ENCODE measurements at regions of chr7 and their contacts with region 1.

Region 1: GRCh38 chr7:149662591-149663095 is 110.7 kb downstream of the ZNF467 start:
- DNase-seq: peak; percentile 31 to 70 (median 59)
- ATAC-seq: peak; percentile 56
- H3K4me3 ChIP-seq: no peak overlapping the region
- H3K4me3 Mint-ChIP-seq: no peak overlapping the region
- H3K27ac ChIP-seq: no peak overlapping the region
- H3K27ac Mint-ChIP-seq: no peak overlapping the region
- H3K4me1 ChIP-seq: no peaks in the 10 kb centered on the region
- H3K4me1 Mint-ChIP-seq: no peaks in the 10 kb centered on the region
- H3K27me3 ChIP-seq: peaks cover 0 to 3% of the 10 kb centered on the region in 2 experiments
- H3K27me3 Mint-ChIP-seq: peaks cover 34% of the 10 kb centered on the region
- CTCF ChIP-seq: no peak

Region 2: DNA sequence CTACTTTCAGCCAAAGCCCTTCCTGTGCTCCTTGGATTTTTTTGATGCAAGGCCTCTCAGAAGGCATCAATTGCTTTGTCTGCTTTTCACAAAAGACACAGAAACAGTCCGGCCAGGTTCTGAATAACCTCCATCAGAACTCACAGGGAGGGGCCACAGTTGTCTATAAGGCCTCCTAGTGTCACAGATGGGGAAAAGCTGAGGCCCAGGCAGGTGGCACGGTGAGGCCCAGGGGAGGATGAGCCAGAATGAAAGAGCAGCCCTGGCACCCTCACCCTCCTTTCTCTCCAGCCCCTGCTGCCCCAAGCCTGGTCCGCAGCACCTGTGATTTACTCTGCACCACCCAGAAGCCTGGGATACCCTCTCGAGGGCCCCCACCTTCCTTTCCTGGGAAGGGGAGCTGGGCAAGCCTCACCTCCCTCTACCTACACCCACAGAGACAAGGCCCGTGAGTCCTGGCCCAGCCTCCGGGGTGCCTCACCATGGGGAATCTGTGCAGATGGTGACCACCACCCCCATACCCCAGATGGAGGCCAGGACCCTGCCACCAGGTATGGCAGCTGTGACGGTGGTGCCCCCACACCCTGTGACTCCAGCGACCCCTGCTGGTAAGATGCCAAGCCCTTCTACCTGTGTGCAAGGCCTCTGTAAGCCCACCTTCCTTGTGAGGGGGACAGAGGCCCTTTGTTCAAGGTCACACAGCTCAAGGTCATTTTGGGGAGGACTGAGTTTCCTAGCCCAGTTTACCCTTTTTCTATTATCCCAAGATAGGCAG is 136.9 kb after region 1 on chr7:
- CTCF ChIA-PET with region 1: interaction called, 13 read pairs
- POLR2A ChIA-PET with region 1: no interaction called
- intact Hi-C with region 1: loop called in 1 of 2 experiments (anchors 2 kb)
- DNase-seq: peak; percentile 36 to 77 (median 70)
- ATAC-seq: peak; percentile 85
- H3K4me3 ChIP-seq: no peak overlapping the region
- H3K4me3 Mint-ChIP-seq: no peak overlapping the region
- H3K27ac ChIP-seq: no peak overlapping the region
- H3K27ac Mint-ChIP-seq: no peak overlapping the region
- H3K4me1 ChIP-seq: no peaks in the 10 kb centered on the region
- H3K4me1 Mint-ChIP-seq: no peaks in the 10 kb centered on the region
- H3K27me3 ChIP-seq: no peaks in the 10 kb centered on the region
- H3K27me3 Mint-ChIP-seq: no peaks in the 10 kb centered on the region
- CTCF ChIP-seq: peak; percentile 57

Measured in CD8-positive, alpha-beta T cell (primary cell).